ENCODE measurements at regions of chr4 and their contacts with region 1.

Region 1: GRCh38 chr4:78040431-78040830 is 16.7 kb upstream of the FRAS1 start:
- DNase-seq: no peak
- ATAC-seq: no peak
- H3K4me3 ChIP-seq: no peak overlapping the region
- H3K4me3 Mint-ChIP-seq: no peak overlapping the region
- H3K27ac ChIP-seq: no peak overlapping the region
- H3K27ac Mint-ChIP-seq: no peak overlapping the region
- H3K4me1 ChIP-seq: no peaks in the 10 kb centered on the region
- H3K4me1 Mint-ChIP-seq: no peaks in the 10 kb centered on the region
- H3K27me3 ChIP-seq: no peaks in the 10 kb centered on the region
- H3K27me3 Mint-ChIP-seq: peaks cover 10% of the 10 kb centered on the region
- CTCF ChIP-seq: no peak

Region 2: DNA sequence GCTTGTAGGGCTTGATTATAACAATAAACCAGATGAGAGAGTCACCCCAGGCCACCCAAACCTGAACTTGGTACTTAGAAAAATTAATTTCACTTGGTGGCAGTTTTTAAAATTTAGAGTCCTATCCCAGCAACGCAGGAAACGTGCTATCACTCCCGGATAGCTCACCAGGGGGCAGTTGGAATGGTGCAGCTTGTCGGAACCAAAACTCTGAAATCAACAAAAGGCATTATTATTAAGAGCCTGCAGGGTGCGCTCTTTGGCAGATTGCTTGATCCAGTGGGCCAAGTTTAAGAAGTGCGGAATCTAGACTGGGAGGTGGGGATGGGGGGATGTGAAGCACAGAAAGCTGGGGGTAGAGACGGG is 19.1 kb after region 1 on chr4:
- CTCF ChIA-PET with region 1: interaction called, 18 read pairs
- POLR2A ChIA-PET with region 1: no interaction called
- intact Hi-C with region 1: no loop called
- DNase-seq: peak; percentile 59
- ATAC-seq: peak; percentile 26
- H3K4me3 ChIP-seq: peak overlapping the region in 3 of 5 experiments; percentile 64 to 92 (median 75)
- H3K4me3 Mint-ChIP-seq: peak overlapping the region; percentile 90
- H3K27ac ChIP-seq: no peak overlapping the region
- H3K27ac Mint-ChIP-seq: no peak overlapping the region
- H3K4me1 ChIP-seq: peaks cover 27 to 36% of the 10 kb centered on the region in 2 donors
- H3K4me1 Mint-ChIP-seq: peaks cover 27% of the 10 kb centered on the region
- H3K27me3 ChIP-seq: peaks cover 0 to 59% (median 35%) of the 10 kb centered on the region in 4 experiments
- H3K27me3 Mint-ChIP-seq: peaks cover 57% of the 10 kb centered on the region
- CTCF ChIP-seq: peak; percentile 32

Measured in B cell (primary cell).